ENCODE measurements at regions of chr10 and their contacts with region 1.

Region 1: GRCh38 chr10:96586419-96587263 is at the start of gene TM9SF3:
- DNase-seq: peak; percentile 86
- H3K4me3 Mint-ChIP-seq: peak within 1 kb of the TSS; percentile 96
- H3K27ac Mint-ChIP-seq: peak within 1 kb of the TSS; percentile 89
- H3K4me1 Mint-ChIP-seq: peaks cover 43% of the 10 kb centered on the region
- H3K27me3 Mint-ChIP-seq: peaks cover 9% of the 10 kb centered on the region
- total RNA-seq, gene TM9SF3: 81.7 and 87.7 TPM in 2 replicates

Region 2: GRCh38 chr10:95907456-95908253 is 679.0 kb before region 1 on chr10 and contains the start of gene CC2D2B:
- intact Hi-C with region 1: loop called (anchors 5 kb)
- DNase-seq: peak; percentile 59
- H3K4me3 Mint-ChIP-seq: peak within 1 kb of the TSS; percentile 92
- H3K27ac Mint-ChIP-seq: peak within 1 kb of the TSS; percentile 91
- H3K4me1 Mint-ChIP-seq: peaks cover 16% of the 10 kb centered on the region
- H3K27me3 Mint-ChIP-seq: peaks cover 16% of the 10 kb centered on the region
- total RNA-seq, gene CC2D2B: 0.60 and 0.96 TPM in 2 replicates

Region 3: GRCh38 chr10:96513698-96514561 is 72.7 kb before region 1 on chr10 and contains the start of gene TLL2:
- intact Hi-C with region 1: loop called (anchors 2 kb)
- DNase-seq: peak; percentile 63
- H3K4me3 Mint-ChIP-seq: peak within 1 kb of the TSS; percentile 66
- H3K27ac Mint-ChIP-seq: no peak within 1 kb of the TSS
- H3K4me1 Mint-ChIP-seq: peaks cover 7% of the 10 kb centered on the region
- H3K27me3 Mint-ChIP-seq: peaks cover 33% of the 10 kb centered on the region
- total RNA-seq, gene TLL2: 0.07 TPM in 1 of 2 replicates, not detected in the other

Region 4: GRCh38 chr10:96719850-96720421 is 133.3 kb after region 1 on chr10:
- intact Hi-C with region 1: loop called (anchors 2 kb)
- DNase-seq: peak; percentile 14
- H3K4me3 Mint-ChIP-seq: peak overlapping the region; percentile 95
- H3K27ac Mint-ChIP-seq: peak overlapping the region; percentile 88
- H3K4me1 Mint-ChIP-seq: peaks cover 27% of the 10 kb centered on the region
- H3K27me3 Mint-ChIP-seq: peaks cover 9% of the 10 kb centered on the region

Region 5: DNA sequence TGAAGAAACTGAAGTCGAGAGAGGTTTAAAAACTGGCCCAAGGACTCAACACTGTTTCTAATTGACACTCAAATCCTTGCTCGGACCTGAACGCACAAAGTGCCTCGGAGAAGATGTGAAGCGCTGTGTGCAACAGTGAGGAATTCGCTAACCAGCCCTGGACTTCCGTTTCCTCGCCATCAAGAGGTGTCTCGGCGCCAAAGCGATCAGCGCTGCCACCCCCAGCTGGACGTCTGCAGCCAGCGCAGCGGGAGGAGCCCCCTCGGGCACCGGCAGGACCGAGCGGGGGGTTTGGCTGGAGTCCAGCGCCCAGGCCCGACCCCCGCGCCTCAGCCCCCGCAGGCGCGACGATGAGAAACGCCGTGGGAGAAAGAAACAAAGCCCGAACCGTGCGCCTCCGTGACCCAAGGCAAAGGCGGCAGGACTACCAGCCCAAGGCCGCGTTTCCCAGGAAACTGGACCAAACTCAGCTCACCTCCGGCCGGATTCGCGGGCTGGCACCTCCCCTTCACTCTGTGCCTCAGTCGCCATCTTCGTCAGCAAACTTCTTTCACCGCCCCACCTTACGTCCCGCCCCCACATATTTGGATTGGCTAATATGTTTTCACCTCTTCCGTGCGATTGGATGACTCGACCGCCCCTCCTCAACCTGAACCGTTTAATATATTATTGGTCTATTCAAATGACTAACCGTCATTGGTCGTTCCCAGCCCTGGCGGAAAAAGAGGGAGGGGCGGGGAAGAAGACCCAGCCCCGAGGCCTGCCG is 705.6 kb after region 1 on chr10 and contains the start of gene ARHGAP19:
- intact Hi-C with region 1: loop called (anchors 2 kb)
- DNase-seq: peak; percentile 92
- H3K4me3 Mint-ChIP-seq: peak within 1 kb of the TSS; percentile 91
- H3K27ac Mint-ChIP-seq: peak within 1 kb of the TSS; percentile 92
- H3K4me1 Mint-ChIP-seq: peaks cover 22% of the 10 kb centered on the region
- H3K27me3 Mint-ChIP-seq: peaks cover 3% of the 10 kb centered on the region
- total RNA-seq, gene ARHGAP19: 27.1 and 27.8 TPM in 2 replicates

Region 6: DNA sequence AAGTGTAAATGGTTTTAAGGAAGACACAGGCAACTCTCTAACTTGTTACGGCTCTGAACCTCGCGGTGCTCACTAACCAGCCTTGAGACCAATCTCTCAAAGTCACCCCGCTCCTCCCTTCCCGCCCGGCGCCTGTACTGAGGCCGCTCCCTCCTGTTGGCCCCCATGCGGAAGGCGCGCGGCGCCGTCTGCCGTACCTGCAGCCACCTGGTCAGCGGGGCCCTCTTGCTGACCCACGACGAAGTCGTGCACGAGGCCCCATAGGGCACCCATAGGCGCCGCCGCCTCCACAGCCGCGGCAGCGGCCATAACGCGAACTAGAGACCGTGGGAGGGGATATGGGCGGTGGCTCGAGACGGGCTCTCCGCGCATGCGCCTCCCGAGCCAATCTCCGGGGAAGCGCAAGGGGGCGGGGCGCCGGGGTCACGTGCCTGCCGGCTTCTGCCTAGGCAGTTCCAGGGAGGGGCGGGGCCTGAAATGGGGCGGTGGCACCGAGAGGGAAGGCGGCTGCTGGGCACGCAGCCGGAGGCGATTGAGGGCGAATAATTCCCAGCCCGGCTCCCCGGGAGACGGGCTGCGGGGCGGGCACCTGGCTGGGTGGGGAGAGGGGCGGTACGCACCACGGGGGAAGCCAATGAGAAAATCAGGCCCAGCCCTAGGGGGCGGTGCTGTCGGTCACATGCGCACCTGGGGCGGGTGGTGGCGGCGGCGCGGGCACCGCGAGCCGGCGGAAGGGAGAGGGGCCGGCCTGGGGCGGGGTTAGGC is 911.6 kb after region 1 on chr10 and contains the start of gene MMS19:
- intact Hi-C with region 1: loop called (anchors 5 kb)
- DNase-seq: peak; percentile 99
- H3K4me3 Mint-ChIP-seq: peak within 1 kb of the TSS; percentile 99
- H3K27ac Mint-ChIP-seq: peak within 1 kb of the TSS; percentile 99
- H3K4me1 Mint-ChIP-seq: peaks cover 47% of the 10 kb centered on the region
- H3K27me3 Mint-ChIP-seq: peaks cover 34% of the 10 kb centered on the region
- total RNA-seq, gene MMS19: 91.8 and 93.2 TPM in 2 replicates